PC-9 (cell line): ENCODE measurements at regions of chr1 and their contacts with region 1.

Region 1: GRCh38 chr1:231557898-231558707 is 29.6 kb downstream of the TSNAX start:
- DNase-seq: no peak
- H3K4me3 ChIP-seq: no peak overlapping the region
- H3K27ac ChIP-seq: no peak overlapping the region
- H3K4me1 ChIP-seq: no peaks in the 10 kb centered on the region
- H3K27me3 ChIP-seq: no peaks in the 10 kb centered on the region
- CTCF ChIP-seq: no peak

Region 2: GRCh38 chr1:231478800-231479199 is 79.3 kb before region 1 on chr1:
- CTCF ChIA-PET with region 1: no interaction called
- POLR2A ChIA-PET with region 1: no interaction called
- intact Hi-C with region 1: no loop called
- DNase-seq: no peak
- H3K4me3 ChIP-seq: no peak overlapping the region
- H3K27ac ChIP-seq: no peak overlapping the region
- H3K4me1 ChIP-seq: no peaks in the 10 kb centered on the region
- H3K27me3 ChIP-seq: no peaks in the 10 kb centered on the region
- CTCF ChIP-seq: no peak

Region 3: DNA sequence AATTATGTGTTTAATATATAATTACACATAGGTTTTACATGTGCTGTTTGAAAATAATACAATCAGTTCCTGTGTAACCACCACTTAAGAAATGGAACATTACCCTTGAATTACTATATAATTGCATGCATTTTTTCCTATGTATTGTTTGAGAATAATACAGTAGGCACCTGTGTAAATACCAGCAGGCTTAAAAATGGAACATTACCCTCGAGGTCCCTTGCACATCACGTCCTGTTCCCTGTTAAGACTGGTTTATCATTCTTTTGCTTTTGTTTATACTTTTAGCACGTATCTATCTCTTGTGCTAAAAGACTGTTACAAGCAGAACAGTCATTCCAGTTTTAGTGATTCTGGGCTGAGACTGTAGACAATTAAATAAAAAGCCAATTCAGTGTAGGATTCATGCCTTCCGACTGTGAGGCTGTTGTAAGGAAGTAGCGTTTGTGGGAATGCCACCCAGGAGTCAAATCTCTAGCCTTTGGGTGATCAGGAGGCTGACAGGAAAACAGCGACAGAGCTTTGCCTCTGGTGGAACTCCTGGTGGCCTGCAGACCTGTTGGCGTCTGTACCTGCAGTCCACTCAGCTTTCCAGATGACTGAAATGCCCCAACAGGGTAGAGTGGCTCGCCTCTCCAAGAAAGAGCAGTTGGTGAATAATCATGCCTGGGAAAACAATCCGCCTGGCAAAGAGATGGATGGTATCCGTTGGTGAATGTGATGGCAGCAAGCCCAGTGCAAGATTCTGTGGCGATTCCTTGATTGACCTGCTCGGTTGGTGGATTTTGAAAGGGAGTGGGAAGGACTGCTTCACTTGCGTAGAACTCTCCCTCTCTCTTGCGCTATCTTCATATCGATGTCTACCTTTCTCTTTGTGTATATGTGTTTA is 126.5 kb after region 1 on chr1:
- CTCF ChIA-PET with region 1: no interaction called
- POLR2A ChIA-PET with region 1: no interaction called
- intact Hi-C with region 1: loop called (anchors 5 kb)
- DNase-seq: no peak
- H3K4me3 ChIP-seq: no peak overlapping the region
- H3K27ac ChIP-seq: no peak overlapping the region
- H3K4me1 ChIP-seq: no peaks in the 10 kb centered on the region
- H3K27me3 ChIP-seq: no peaks in the 10 kb centered on the region
- CTCF ChIP-seq: no peak